ENCODE measurements at regions of chr13 and their contacts with region 1.

Region 1: DNA sequence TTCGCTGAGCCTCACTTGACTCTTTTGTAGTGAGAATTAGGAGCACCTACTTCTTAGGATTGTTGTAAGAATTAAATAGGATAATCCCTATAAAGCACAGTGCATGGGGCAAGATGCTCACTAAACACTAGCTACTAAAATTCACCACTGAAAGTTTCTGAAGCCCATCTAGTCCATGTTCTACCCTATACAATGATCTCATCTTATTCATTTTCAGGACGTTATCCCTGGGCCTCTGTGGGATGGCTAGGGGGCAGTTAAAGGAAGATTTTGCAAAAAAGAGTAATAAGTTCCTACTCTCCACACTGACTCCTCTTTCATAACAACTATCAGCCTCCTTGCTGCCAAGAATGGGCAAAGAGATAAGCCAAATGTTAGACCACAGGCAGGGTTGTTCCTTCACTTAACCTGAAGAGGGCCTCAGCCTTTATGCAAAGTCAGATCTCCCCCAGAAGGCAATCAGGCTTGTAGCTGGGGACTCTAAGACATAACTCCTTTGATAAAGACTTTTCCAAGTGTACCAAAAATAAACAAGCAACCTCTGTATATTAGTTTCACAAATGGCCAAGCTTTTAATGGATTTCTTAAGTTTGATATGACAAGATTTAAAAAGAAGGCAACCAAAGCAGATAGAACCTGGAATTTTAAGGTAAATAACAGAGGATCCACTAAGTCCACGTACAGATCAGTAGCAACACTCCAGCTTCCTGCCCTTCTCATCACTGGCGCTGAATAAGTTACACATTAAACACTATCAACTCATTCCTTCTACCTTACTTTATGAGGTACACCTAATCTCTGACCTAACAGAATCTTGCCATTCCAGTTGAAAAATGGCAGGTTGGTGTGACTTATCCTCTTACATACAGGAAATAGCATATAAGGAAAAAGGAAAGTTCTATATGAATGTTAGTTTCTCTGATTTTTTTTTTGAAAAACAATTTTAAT is 44.4 kb downstream of the ELF1 start:
- DNase-seq: peak; percentile 65
- ATAC-seq: peak; percentile 95
- H3K4me3 ChIP-seq: peak overlapping the region in 1 of 3 experiments; percentile 3; a peak in 1 of 6 replicates
- H3K27ac ChIP-seq: peak overlapping the region; percentile 57
- H3K4me1 ChIP-seq: peaks cover 70% of the 10 kb centered on the region
- H3K27me3 ChIP-seq: no peaks in the 10 kb centered on the region
- CTCF ChIP-seq: peak; percentile 63
- EP300 ChIP-seq: no peak
- POLR2A ChIP-seq: no peak
- RAD21 ChIP-seq: 0 out of 2 replicates have a peak, but pooled peaks have one; percentile 25

Region 2: GRCh38 chr13:41028051-41028450 is 53.3 kb after region 1 on chr13:
- CTCF ChIA-PET with region 1: no interaction called
- POLR2A ChIA-PET with region 1: no interaction called
- in situ Hi-C with region 1: no loop called
- intact Hi-C with region 1: no loop called
- DNase-seq: no peak
- ATAC-seq: no peak
- H3K4me3 ChIP-seq: no peak overlapping the region
- H3K27ac ChIP-seq: no peak overlapping the region
- H3K4me1 ChIP-seq: peaks cover 50% of the 10 kb centered on the region
- H3K27me3 ChIP-seq: no peaks in the 10 kb centered on the region
- CTCF ChIP-seq: no peak
- EP300 ChIP-seq: no peak
- POLR2A ChIP-seq: no peak
- RAD21 ChIP-seq: no peak

Region 3: DNA sequence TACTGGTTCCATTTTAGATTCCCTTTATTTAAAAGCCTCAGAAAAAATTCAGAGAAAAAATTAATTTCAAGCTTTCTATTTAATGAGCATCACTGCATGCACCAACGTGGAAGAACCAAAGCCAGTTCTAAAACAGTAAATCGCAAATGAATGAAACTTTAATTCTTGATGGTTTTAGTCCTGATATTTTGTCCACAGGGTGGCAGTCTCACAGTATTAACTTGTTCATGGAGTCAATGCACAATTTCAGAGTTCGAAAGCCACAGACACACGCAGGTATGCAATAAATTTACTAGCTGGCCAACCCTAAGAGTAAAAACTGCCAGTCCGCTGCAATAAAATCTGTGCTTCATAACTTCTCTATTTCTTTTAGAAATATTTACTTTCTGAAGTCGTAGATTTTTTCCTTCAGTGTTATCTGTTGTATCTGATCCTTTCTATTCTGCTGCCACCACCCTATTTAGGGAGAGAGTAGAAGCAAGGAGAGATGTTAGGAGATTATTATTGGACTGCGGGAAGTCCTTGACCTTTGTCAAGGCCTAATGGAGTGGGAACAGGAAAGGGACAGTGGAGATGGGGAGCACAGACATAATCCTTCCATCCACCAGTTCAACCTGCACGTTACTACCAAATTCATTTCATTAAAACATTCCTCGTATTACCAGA is 79.6 kb after region 1 on chr13:
- CTCF ChIA-PET with region 1: interaction called, 7 read pairs
- POLR2A ChIA-PET with region 1: interaction called, 3 read pairs
- in situ Hi-C with region 1: loop called (anchors 10 kb)
- intact Hi-C with region 1: loop called (anchors 1 kb)
- DNase-seq: peak; percentile 53
- ATAC-seq: peak; percentile 49
- H3K4me3 ChIP-seq: 0 out of 6 replicates have a peak overlapping the region, but pooled peaks of 1 of the 3 experiments have one; percentile 12
- H3K27ac ChIP-seq: peak overlapping the region; percentile 35
- H3K4me1 ChIP-seq: peaks cover 94% of the 10 kb centered on the region
- H3K27me3 ChIP-seq: no peaks in the 10 kb centered on the region
- CTCF ChIP-seq: peak; percentile 53
- EP300 ChIP-seq: no peak
- POLR2A ChIP-seq: no peak
- RAD21 ChIP-seq: no peak

Region 4: GRCh38 chr13:41098761-41099160 is 124.0 kb after region 1 on chr13:
- CTCF ChIA-PET with region 1: no interaction called
- POLR2A ChIA-PET with region 1: no interaction called
- in situ Hi-C with region 1: no loop called
- intact Hi-C with region 1: no loop called
- DNase-seq: no peak
- ATAC-seq: no peak
- H3K4me3 ChIP-seq: no peak overlapping the region
- H3K27ac ChIP-seq: no peak overlapping the region
- H3K4me1 ChIP-seq: no peaks in the 10 kb centered on the region
- H3K27me3 ChIP-seq: no peaks in the 10 kb centered on the region
- CTCF ChIP-seq: no peak
- EP300 ChIP-seq: no peak
- POLR2A ChIP-seq: no peak
- RAD21 ChIP-seq: no peak

Region 5: DNA sequence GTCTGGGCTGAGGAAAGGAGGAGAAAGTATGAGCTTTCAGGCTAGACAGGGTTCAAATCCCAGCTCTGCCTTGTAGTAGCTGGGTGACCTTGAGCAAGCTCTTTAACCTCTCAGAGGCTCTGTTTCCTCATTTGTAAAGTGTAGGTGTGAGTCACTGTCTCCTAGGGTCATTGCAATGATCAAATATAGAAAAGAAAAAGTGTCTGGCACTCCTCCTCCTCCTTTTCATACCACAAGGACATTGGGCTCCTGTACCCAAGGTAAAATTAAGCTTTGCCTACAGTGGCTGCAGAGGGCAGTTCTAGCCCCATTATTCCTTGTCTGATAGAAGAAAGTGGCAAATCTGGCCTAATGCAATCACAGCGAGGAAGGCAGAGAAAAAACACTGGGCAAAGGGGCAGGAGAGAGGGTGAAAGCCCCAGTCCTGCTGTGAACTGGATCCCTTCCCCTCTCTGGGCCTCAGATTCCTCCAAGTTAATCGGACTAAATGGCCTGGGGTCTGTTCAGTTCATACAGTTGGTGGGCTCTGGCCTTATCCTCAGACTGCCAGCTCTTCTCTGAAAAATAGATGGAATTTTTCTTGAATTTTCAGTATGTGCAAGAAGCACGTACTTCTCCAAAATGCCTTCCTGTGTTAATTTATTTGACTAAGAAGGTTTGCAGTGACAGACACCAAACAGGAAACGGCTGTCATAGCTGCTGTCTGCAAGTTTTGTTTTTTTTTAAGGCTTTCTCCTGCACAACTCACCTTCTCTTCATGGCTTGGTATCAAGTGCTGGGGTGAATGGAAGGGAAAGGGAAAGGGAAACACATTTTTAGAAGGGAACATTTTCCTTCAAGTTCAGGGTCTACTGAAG is 517.9 kb after region 1 on chr13:
- CTCF ChIA-PET with region 1: no interaction called
- POLR2A ChIA-PET with region 1: no interaction called
- in situ Hi-C with region 1: no loop called
- intact Hi-C with region 1: no loop called
- DNase-seq: no peak
- ATAC-seq: no peak
- H3K4me3 ChIP-seq: no peak overlapping the region
- H3K27ac ChIP-seq: no peak overlapping the region
- H3K4me1 ChIP-seq: peaks cover 51% of the 10 kb centered on the region
- H3K27me3 ChIP-seq: no peaks in the 10 kb centered on the region; a peak in 1 of 5 replicates
- CTCF ChIP-seq: no peak
- EP300 ChIP-seq: no peak
- POLR2A ChIP-seq: no peak
- RAD21 ChIP-seq: no peak